Thyroid gland (tissue), 4 donors: ENCODE measurements at regions of chr12 and their contacts with region 1.

Region 1: GRCh38 chr12:27293463-27293862 is 39.2 kb upstream of the BMAL2 start:
- DNase-seq: peak; percentile 64 to 72
- H3K4me3 ChIP-seq: no peak overlapping the region
- H3K27ac ChIP-seq: peak overlapping the region in 2 of 3 donors; percentile 4 to 76
- H3K4me1 ChIP-seq: peaks cover 21 to 30% of the 10 kb centered on the region in 2 donors
- H3K27me3 ChIP-seq: no peaks in the 10 kb centered on the region
- CTCF ChIP-seq: no peak
- POLR2A ChIP-seq: no peak

Region 2: DNA sequence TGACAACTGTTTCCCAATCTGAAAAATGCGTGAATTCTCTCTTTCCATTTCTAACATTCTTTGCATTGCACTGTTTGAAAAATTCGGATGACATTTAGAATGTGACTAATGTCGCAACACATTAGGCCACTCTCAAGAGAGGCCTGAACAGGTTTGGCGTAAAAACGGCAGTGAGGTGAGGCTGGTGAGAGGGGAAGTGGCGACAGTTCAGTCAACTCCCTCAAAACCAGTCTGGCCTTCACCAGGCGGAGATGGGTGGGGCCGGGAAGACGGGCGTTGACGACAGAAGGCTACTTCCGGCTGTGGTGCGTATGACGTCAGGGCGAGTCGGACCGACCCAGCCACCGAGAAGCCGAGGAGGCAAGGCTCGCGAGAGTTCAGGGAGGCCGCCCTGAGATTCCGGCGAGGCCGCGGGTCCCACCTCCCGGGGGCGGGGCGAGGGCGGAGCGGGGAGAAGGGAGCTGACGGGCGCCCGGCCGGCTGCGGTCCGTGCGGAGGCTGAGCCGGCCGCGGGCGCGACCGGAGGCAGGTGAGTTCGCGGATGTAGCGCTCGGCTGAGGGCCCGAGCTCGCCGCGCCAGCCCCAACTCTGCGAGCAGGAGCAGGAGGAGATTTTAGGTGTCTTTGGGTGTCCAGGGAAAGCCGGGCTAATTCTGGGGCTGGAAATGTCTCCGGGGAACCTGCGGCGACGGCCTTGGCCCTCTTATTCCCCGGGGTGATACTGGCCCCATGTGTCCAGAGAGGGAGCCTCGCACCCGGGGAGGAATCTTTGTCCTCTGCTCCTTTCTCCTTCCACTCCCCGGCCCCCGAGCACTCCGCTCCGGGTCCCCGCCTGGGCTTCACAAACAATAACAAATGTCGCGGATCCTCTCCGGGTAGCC is 49.4 kb before region 1 on chr12 and contains the start of gene STK38L:
- intact Hi-C with region 1: loop called (anchors 10 kb)
- DNase-seq: peak; percentile 93 to 97
- H3K4me3 ChIP-seq: peak within 1 kb of the TSS; percentile 52 to 83 (median 61)
- H3K27ac ChIP-seq: peak within 1 kb of the TSS; percentile 61 to 71 (median 62)
- H3K4me1 ChIP-seq: peaks cover 10 to 13% of the 10 kb centered on the region in 2 donors
- H3K27me3 ChIP-seq: no peaks in the 10 kb centered on the region
- CTCF ChIP-seq: peak in 1 of 6 experiments; percentile 8
- POLR2A ChIP-seq: peak in 1 of 2 donors; percentile 92
- total RNA-seq, gene STK38L: 20.1 to 42.2 (median 27.0) TPM